Endothelial cell of umbilical vein (primary cell): ENCODE measurements at regions of chr18 and their contacts with region 1.

Region 1: DNA sequence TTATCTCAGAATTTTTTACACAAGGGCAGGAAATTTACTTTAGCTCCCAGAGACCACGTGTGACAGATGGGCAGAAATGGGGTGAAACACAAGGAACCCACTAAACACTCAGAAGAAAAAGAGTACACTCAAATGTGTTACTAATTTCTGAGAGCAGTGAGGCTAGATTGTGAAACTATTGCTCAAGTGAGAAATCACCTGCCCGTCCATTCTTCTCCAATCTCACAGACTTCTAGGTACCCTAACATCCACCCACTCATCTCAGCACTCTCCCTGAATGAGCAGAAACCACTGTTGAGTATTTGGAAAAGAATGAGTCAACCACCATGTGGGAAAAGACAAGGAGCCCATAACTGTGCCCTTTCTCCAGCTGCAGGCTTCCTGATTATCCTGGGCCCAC is 293.0 kb upstream of the CDH2 start:
- DNase-seq: no peak
- H3K4me3 ChIP-seq: no peak overlapping the region
- H3K27ac ChIP-seq: no peak overlapping the region
- H3K4me1 ChIP-seq: no peaks in the 10 kb centered on the region
- H3K27me3 ChIP-seq: no peaks in the 10 kb centered on the region
- CTCF ChIP-seq: no peak
- POLR2A ChIP-seq: no peak

Region 2: GRCh38 chr18:28494151-28494550 is 24.2 kb after region 1 on chr18:
- CTCF ChIA-PET with region 1: interaction called, 3 read pairs
- POLR2A ChIA-PET with region 1: no interaction called
- dilution Hi-C with region 1: no loop called
- intact Hi-C with region 1: loop called (anchors 1 kb)
- DNase-seq: no peak
- H3K4me3 ChIP-seq: no peak overlapping the region
- H3K27ac ChIP-seq: no peak overlapping the region
- H3K4me1 ChIP-seq: no peaks in the 10 kb centered on the region
- H3K27me3 ChIP-seq: no peaks in the 10 kb centered on the region
- CTCF ChIP-seq: no peak
- POLR2A ChIP-seq: no peak

Region 3: DNA sequence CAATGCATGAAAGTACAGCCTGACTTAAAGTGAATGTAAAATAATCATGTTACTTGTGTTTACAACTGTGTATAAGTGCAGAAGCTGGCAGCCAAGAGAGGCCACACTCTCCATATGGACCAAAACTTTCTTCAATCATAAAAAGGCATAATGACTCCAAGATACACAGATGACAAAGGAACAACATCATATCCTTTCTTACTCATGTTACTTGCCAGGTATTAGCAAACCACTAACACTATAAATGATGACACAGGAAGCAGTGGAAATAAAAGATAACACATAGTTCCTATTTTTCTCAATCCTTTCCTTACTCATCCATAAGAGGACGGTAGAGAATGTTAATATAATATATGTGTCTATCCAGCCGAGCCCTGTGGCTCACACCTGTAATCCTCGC is 107.0 kb after region 1 on chr18:
- CTCF ChIA-PET with region 1: no interaction called
- POLR2A ChIA-PET with region 1: no interaction called
- dilution Hi-C with region 1: no loop called
- intact Hi-C with region 1: no loop called
- DNase-seq: no peak
- H3K4me3 ChIP-seq: no peak overlapping the region
- H3K27ac ChIP-seq: no peak overlapping the region
- H3K4me1 ChIP-seq: no peaks in the 10 kb centered on the region
- H3K27me3 ChIP-seq: no peaks in the 10 kb centered on the region
- CTCF ChIP-seq: no peak
- POLR2A ChIP-seq: no peak